Mammary epithelial cell (primary cell): ENCODE measurements at regions of chr10 and their contacts with region 1.

Region 1: DNA sequence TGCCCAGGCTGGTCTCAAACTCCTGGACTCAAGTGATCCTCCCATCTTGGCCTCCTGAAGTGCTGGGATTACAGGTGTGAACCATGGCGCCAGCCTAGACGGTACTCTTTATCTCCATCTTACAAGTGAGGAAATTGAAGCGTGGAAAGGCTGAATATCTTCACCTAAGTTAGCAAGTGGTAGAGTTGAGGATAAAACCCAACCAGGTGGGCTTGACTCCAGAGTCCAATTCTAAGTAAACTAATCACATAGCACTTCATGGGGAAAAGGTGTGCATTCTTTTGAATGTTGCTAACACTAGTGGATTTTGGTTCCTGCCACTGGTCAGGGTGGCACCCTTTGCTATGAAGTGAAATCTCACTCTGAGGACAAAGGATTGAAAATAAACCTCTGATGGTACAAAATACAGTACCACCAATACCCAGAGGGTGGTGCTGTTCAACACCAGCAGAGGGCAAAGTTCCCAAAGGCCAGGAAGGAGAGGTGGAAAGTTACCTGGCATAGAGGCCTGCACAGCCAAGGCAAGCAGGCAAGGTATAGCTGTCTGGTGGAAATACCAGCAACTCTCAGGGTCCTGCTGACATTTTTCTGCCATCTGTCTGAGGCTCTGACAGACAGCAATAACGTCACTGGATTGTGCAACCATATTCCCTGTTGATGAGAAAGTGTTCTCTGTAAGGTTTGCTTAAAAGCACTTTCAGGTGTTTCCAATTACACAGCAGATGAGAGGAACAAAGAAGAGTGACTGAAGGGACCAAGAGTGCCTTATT is 17.6 kb downstream of the ZDHHC16 start:
- DNase-seq: peak; percentile 65
- H3K4me3 ChIP-seq: no peak overlapping the region
- H3K27ac ChIP-seq: no peak overlapping the region
- H3K4me1 ChIP-seq: peaks cover 26% of the 10 kb centered on the region
- H3K27me3 ChIP-seq: no peaks in the 10 kb centered on the region
- CTCF ChIP-seq: peak; percentile 90 to 91

Region 2: DNA sequence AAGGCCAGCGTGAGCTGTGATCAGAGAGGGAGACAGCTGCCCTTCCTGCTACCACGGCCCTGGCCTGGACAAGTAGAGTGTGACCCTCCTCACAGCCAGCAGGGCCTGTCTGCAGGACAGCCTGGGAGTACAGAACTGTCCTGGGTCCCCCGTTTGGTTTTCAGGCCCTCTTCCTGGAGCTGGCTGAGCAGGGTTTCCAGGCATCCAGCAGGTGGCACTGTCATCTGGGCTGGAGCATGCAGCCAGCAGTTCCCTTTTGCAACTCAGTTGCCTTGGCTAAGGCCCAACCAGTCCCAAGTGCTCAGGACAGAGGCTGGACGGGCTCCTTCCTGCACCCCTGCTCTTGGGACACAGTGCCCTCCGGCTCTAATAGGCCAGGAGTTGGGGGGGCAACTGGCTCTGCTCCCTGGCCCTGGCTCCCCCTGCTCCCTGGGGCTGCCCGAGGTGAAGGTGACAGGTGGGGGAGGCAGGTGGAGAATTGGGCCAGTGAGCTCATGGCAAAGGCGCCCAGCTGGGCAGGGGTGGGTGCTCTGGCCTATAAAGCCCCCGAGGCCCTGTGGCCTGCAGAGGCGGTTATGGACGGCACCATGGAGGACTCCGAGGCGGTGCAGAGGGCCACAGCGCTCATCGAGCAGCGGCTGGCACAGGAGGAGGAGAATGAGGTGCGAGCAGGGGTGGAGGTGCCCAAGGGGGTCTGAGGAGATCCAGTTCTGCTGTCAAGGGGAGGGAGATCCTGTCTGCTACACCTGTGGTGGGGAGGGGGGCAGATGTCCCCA is 108.9 kb after region 1 on chr10 and contains the start of gene ANKRD2:
- CTCF ChIA-PET with region 1: no interaction called
- dilution Hi-C with region 1: no loop called
- in situ Hi-C with region 1: no loop called
- intact Hi-C with region 1: loop called (anchors 1 kb)
- DNase-seq: peak; percentile 67
- H3K4me3 ChIP-seq: peak within 1 kb of the TSS in 2 of 3 experiments; percentile 5 to 12
- H3K27ac ChIP-seq: peak within 1 kb of the TSS; percentile 80
- H3K4me1 ChIP-seq: peaks cover 53% of the 10 kb centered on the region
- H3K27me3 ChIP-seq: no peaks in the 10 kb centered on the region
- CTCF ChIP-seq: peak; percentile 94 to 97
- total RNA-seq, gene ANKRD2: 0.47 to 0.83 TPM

Region 3: GRCh38 chr10:97623277-97623676 is 159.7 kb after region 1 on chr10:
- CTCF ChIA-PET with region 1: no interaction called
- dilution Hi-C with region 1: loop called (anchors 5 kb)
- in situ Hi-C with region 1: no loop called
- intact Hi-C with region 1: no loop called
- DNase-seq: no peak
- H3K4me3 ChIP-seq: no peak overlapping the region
- H3K27ac ChIP-seq: no peak overlapping the region
- H3K4me1 ChIP-seq: no peaks in the 10 kb centered on the region
- H3K27me3 ChIP-seq: no peaks in the 10 kb centered on the region
- CTCF ChIP-seq: no peak

Region 4: DNA sequence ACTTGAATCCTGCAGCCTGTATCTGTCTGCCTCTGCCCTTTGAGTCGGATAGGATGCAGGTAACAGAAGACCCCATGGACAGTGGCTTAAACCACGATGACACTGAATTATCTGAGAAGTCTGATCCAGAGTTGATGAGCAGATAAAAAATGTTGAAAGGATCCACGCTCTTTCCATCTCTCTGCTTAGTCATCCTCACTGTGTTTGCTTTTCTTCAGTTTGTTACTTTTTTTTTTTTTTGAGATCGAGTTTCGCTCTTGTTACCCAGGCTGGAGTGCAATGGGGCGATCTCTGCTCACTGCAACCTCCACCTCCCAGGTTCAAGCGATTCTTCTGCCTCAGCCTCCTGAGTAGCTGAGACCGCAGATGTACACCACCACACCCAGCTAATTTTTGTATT is 349.1 kb after region 1 on chr10:
- CTCF ChIA-PET with region 1: no interaction called
- dilution Hi-C with region 1: no loop called
- in situ Hi-C with region 1: no loop called
- intact Hi-C with region 1: no loop called
- DNase-seq: no peak
- H3K4me3 ChIP-seq: no peak overlapping the region
- H3K27ac ChIP-seq: no peak overlapping the region
- H3K4me1 ChIP-seq: peaks cover 3% of the 10 kb centered on the region
- H3K27me3 ChIP-seq: no peaks in the 10 kb centered on the region
- CTCF ChIP-seq: no peak